ENCODE measurements at regions of chr5 and their contacts with region 1.

Region 1: DNA sequence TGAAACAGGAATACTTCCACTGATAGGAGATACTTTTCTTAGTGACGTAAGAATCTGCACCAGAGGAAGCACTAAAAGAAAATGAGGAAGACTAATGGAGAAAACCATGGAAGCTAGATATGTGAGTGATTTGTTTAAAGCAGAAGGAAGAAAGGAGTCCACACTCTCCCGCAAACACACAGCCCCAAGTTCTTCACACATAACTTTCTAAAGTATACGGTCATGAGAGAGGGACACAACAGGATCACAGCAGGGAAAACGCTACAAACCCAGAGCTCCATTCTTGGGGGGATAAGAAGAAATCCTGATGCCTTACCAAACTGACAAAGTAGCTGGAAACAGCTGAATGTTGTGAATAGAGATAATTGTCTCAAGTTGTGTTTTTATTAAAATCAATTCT is 222.2 kb upstream of the TMEM161B start:
- DNase-seq: no peak
- ATAC-seq: no peak; the same call in 1 of the 2 replicates
- H3K4me3 Mint-ChIP-seq: no peak overlapping the region
- H3K27ac Mint-ChIP-seq: no peak overlapping the region
- H3K4me1 Mint-ChIP-seq: peaks cover 34% of the 10 kb centered on the region
- H3K27me3 Mint-ChIP-seq: peaks cover 5% of the 10 kb centered on the region; the same call in 1 of the 2 replicates
- CTCF ChIP-seq: no peak

Region 2: DNA sequence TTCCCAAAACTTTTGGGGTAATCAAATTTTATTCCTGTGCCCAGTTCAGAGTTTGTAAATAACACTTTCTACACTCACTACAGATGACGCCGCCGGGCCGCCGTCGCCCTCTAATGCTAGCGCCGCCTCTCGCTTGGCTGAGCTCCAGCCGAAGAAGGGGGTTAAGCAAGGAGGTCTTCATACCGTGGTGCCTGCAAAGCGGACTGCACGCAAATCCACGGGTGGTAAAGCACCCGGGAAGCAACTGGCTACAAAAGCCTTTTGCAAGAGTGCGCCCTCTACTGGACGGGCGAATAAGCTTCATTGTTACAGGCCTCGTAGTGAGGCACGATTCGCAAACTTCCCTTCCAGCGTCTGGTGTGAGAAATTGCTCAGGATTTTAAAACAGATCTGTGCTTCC is 111.7 kb after region 1 on chr5:
- CTCF ChIA-PET with region 1: interaction called, 10 read pairs
- POLR2A ChIA-PET with region 1: no interaction called
- DNase-seq: peak; percentile 77
- ATAC-seq: 0 out of 2 replicates have a peak, but pooled peaks have one; percentile 26
- H3K4me3 Mint-ChIP-seq: no peak overlapping the region
- H3K27ac Mint-ChIP-seq: no peak overlapping the region
- H3K4me1 Mint-ChIP-seq: 0 out of 2 replicates have a peak, but pooled peaks cover 3% of the 10 kb centered on the region
- H3K27me3 Mint-ChIP-seq: no peaks in the 10 kb centered on the region; the same call in 1 of the 2 replicates
- CTCF ChIP-seq: peak; percentile 77; the same call in 1 of the 2 replicates

Measured in WTC11 (cell line).